ENCODE measurements at regions of chr2 and their contacts with region 1.

Region 1: GRCh38 chr2:71000780-71001591 is 6.3 kb upstream of the TEX261 start:
- DNase-seq: peak; percentile 94
- H3K4me3 Mint-ChIP-seq: peak overlapping the region; percentile 76
- H3K27ac Mint-ChIP-seq: peak overlapping the region; percentile 83
- H3K4me1 Mint-ChIP-seq: peaks cover 19% of the 10 kb centered on the region
- H3K27me3 Mint-ChIP-seq: peaks cover 2% of the 10 kb centered on the region

Region 2: DNA sequence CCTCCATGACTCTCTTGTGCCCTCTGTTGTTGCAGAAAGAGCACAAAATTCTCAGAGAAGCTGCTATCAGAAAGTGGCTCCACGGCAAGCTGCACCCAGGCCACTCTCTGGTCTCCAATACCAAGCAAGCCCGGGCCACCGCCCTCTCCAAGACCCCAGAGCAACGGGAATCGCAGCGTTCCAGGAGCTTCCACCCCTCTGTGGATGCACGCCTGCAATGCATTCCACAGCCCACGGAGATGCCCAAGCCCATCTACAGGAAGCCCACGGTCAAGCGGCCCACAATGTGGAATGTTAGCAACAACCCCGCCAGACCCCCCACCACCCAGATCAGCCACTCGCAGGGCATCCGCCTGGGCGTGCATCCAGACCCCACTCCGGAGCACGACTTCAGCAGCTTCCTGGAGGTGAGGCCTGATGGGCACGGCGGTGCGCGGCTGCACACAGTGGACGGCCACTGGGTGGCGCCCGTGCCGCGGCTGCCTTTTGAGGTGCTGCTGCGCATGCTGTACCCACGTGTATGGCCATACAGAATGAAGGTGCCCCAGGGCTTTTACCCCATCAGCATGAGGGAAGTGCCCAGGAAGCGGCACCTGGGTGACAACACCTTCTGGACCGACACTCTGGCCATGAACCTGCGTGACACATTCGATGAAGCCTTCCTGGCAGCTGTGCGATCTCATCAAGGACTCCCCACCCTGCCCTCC is 16.3 kb before region 1 on chr2:
- intact Hi-C with region 1: loop called (anchors 1 kb)
- DNase-seq: peak; percentile 95
- H3K4me3 Mint-ChIP-seq: peak overlapping the region; percentile 45
- H3K27ac Mint-ChIP-seq: no peak overlapping the region
- H3K4me1 Mint-ChIP-seq: peaks cover 12% of the 10 kb centered on the region
- H3K27me3 Mint-ChIP-seq: no peaks in the 10 kb centered on the region